ENCODE measurements at regions of chr19 and their contacts with region 1.

Region 1: DNA sequence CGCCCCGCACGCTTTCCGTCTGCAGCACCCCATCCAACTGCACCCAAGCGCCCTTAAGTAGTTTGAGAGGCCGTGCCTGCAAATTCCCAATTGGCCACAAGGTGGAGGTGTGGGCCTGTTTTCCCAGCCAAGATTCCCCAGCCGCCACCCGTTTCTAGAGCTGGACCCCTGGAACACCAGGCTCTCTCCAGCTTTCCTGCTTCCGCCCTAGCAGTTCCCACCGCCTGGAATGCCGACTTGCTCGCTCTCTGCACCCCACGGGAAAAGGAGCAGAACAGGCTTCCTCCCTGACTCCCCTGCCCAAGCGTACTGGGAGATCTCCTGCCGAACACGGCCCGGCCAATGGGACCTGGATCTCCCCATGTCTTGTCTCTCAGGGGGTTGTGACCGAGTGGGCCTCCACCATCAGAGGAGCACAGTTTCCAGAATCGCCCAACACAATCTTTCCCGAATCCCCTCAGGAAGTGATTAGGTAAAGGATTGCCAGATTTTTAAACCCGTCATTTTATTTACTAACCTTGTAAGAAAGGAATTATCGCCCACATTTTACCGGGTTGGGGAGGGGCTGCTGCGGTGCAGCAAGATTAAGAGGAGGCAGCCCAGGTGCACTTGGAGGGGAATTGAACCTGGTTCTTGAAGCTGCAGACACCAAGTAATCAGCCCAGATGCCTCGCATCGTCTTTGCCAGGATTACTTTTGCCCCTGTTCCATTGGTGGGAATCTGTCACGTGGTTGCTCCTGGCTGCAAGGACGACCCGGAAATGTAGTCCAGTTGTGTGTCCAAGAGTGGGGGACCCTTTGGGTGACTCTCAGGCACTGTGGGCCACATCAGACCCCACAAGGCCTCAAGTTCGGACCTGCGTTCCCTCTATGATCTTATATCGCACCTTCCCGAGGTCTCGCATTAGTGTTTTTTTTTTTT is 3.5 kb upstream of the NAPSA start:
- DNase-seq: peak; percentile 53 to 89 (median 73)
- ATAC-seq: peak; percentile 83
- H3K4me3 ChIP-seq: peak overlapping the region; percentile 72
- H3K4me3 Mint-ChIP-seq: peak overlapping the region; percentile 88
- H3K27ac ChIP-seq: peak overlapping the region in 1 of 2 donors; percentile 8
- H3K27ac Mint-ChIP-seq: peak overlapping the region; percentile 33
- H3K4me1 ChIP-seq: peaks cover 38% of the 10 kb centered on the region
- H3K4me1 Mint-ChIP-seq: peaks cover 39% of the 10 kb centered on the region
- H3K27me3 ChIP-seq: no peaks in the 10 kb centered on the region
- H3K27me3 Mint-ChIP-seq: no peaks in the 10 kb centered on the region
- CTCF ChIP-seq: peak; percentile 84

Region 2: DNA sequence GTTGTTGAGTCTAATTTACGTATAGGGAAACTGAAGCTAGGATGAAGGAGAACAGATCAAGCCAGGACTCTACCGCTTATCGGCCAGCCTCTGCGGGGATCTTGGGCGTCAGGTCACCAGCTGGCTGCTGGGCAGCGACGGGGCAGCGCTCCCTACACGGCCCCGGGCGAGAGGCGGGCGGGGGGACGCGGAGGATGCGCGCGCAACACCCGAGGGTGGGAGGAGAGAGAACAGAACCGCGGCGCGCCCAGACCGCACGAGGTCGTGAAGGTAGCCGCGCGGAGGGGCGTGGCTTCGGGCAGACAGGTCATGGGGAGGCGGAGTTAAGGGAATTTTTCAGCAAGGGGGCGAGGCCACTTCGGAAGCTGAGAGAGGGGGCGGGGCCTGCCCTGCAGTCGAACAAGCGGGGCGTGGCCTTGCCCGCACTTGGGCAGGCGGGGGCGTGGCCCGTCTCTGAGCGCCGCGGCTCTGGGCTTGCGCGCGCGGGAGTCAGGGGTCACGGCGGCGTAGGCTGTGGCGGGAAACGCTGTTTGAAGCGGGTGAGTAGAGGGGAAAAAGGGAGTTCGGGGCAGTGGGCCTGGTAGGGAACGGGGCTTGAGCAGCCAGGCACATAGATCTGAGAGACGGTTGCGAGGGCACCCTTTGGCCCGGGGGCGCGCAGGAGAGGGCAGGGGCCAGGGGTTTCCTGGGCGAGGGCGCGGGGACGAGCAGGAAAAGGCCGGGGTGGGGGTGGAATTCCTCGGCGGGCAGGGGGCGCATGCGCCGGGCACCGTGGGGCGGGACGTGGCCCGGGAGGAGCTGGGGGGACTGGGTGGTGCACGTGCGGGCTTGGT is 15.2 kb after region 1 on chr19 and contains the start of gene POLD1:
- CTCF ChIA-PET with region 1: interaction called, 4 read pairs
- POLR2A ChIA-PET with region 1: interaction called, 10 read pairs
- intact Hi-C with region 1: no loop called
- DNase-seq: peak; percentile 98 to 100 (median 99)
- ATAC-seq: peak; percentile 88
- H3K4me3 ChIP-seq: peak within 1 kb of the TSS; percentile 66
- H3K4me3 Mint-ChIP-seq: peak within 1 kb of the TSS; percentile 96
- H3K27ac ChIP-seq: peak within 1 kb of the TSS; percentile 70 to 81
- H3K27ac Mint-ChIP-seq: peak within 1 kb of the TSS; percentile 90
- H3K4me1 ChIP-seq: peaks cover 22% of the 10 kb centered on the region
- H3K4me1 Mint-ChIP-seq: peaks cover 38% of the 10 kb centered on the region
- H3K27me3 ChIP-seq: no peaks in the 10 kb centered on the region
- H3K27me3 Mint-ChIP-seq: peaks cover 6% of the 10 kb centered on the region
- CTCF ChIP-seq: no peak
- total RNA-seq, gene POLD1: 22.1 to 24.2 TPM

Region 3: GRCh38 chr19:50414864-50415660 is 46.2 kb after region 1 on chr19:
- CTCF ChIA-PET with region 1: interaction called, 6 read pairs
- POLR2A ChIA-PET with region 1: no interaction called
- intact Hi-C with region 1: loop called (anchors 1 kb)
- DNase-seq: peak; percentile 57 to 84 (median 69)
- ATAC-seq: peak; percentile 94
- H3K4me3 ChIP-seq: no peak overlapping the region
- H3K4me3 Mint-ChIP-seq: no peak overlapping the region
- H3K27ac ChIP-seq: no peak overlapping the region
- H3K27ac Mint-ChIP-seq: no peak overlapping the region
- H3K4me1 ChIP-seq: peaks cover 10% of the 10 kb centered on the region
- H3K4me1 Mint-ChIP-seq: peaks cover 2% of the 10 kb centered on the region
- H3K27me3 ChIP-seq: peaks cover 17 to 19% of the 10 kb centered on the region in 2 experiments
- H3K27me3 Mint-ChIP-seq: peaks cover 16% of the 10 kb centered on the region
- CTCF ChIP-seq: peak; percentile 62

Region 4: GRCh38 chr19:50461066-50461875 is 92.4 kb after region 1 on chr19:
- CTCF ChIA-PET with region 1: interaction called, 5 read pairs
- POLR2A ChIA-PET with region 1: no interaction called
- intact Hi-C with region 1: loop called (anchors 1 kb)
- DNase-seq: peak in 13 of 14 experiments; percentile 26 to 79 (median 45)
- ATAC-seq: peak; percentile 90
- H3K4me3 ChIP-seq: no peak overlapping the region
- H3K4me3 Mint-ChIP-seq: no peak overlapping the region
- H3K27ac ChIP-seq: no peak overlapping the region
- H3K27ac Mint-ChIP-seq: no peak overlapping the region
- H3K4me1 ChIP-seq: peaks cover 5% of the 10 kb centered on the region
- H3K4me1 Mint-ChIP-seq: no peaks in the 10 kb centered on the region
- H3K27me3 ChIP-seq: peaks cover 7 to 19% of the 10 kb centered on the region in 2 experiments
- H3K27me3 Mint-ChIP-seq: peaks cover 51% of the 10 kb centered on the region
- CTCF ChIP-seq: peak; percentile 70

Region 5: GRCh38 chr19:50476224-50476942 is 107.5 kb after region 1 on chr19 and contains the starts of genes EMC10 and GARIN5A:
- CTCF ChIA-PET with region 1: no interaction called
- POLR2A ChIA-PET with region 1: no interaction called
- intact Hi-C with region 1: loop called in 1 of 2 experiments (anchors 5 kb)
- DNase-seq: peak; percentile 81 to 98 (median 92)
- ATAC-seq: peak; percentile 95
- H3K4me3 ChIP-seq: peak within 1 kb of the TSS; percentile 79
- H3K4me3 Mint-ChIP-seq: peak within 1 kb of the TSS; percentile 95
- H3K27ac ChIP-seq: peak within 1 kb of the TSS; percentile 73 to 82
- H3K27ac Mint-ChIP-seq: peak within 1 kb of the TSS; percentile 95
- H3K4me1 ChIP-seq: peaks cover 43% of the 10 kb centered on the region
- H3K4me1 Mint-ChIP-seq: peaks cover 22% of the 10 kb centered on the region
- H3K27me3 ChIP-seq: no peaks in the 10 kb centered on the region
- H3K27me3 Mint-ChIP-seq: no peaks in the 10 kb centered on the region
- CTCF ChIP-seq: no peak
- total RNA-seq, gene EMC10: 80.0 to 80.3 TPM
- total RNA-seq, gene GARIN5A: 0.50 TPM in 1 of 2 experiments, not detected in the other

Region 6: GRCh38 chr19:50556282-50557008 is 187.5 kb after region 1 on chr19:
- CTCF ChIA-PET with region 1: interaction called, 3 read pairs
- POLR2A ChIA-PET with region 1: no interaction called
- intact Hi-C with region 1: loop called in 1 of 2 experiments (anchors 2 kb)
- DNase-seq: peak; percentile 49 to 82 (median 68)
- ATAC-seq: peak; percentile 79
- H3K4me3 ChIP-seq: peak overlapping the region; percentile 47
- H3K4me3 Mint-ChIP-seq: peak overlapping the region; percentile 90
- H3K27ac ChIP-seq: no peak overlapping the region
- H3K27ac Mint-ChIP-seq: no peak overlapping the region
- H3K4me1 ChIP-seq: peaks cover 17% of the 10 kb centered on the region
- H3K4me1 Mint-ChIP-seq: peaks cover 9% of the 10 kb centered on the region
- H3K27me3 ChIP-seq: peaks cover 35 to 56% of the 10 kb centered on the region in 2 experiments
- H3K27me3 Mint-ChIP-seq: peaks cover 87% of the 10 kb centered on the region
- CTCF ChIP-seq: peak; percentile 84

Region 7: GRCh38 chr19:50580970-50581634 is 212.2 kb after region 1 on chr19:
- CTCF ChIA-PET with region 1: no interaction called
- POLR2A ChIA-PET with region 1: no interaction called
- intact Hi-C with region 1: no loop called
- DNase-seq: no peak
- ATAC-seq: no peak
- H3K4me3 ChIP-seq: no peak overlapping the region
- H3K4me3 Mint-ChIP-seq: no peak overlapping the region
- H3K27ac ChIP-seq: no peak overlapping the region
- H3K27ac Mint-ChIP-seq: no peak overlapping the region
- H3K4me1 ChIP-seq: no peaks in the 10 kb centered on the region
- H3K4me1 Mint-ChIP-seq: no peaks in the 10 kb centered on the region
- H3K27me3 ChIP-seq: no peaks in the 10 kb centered on the region
- H3K27me3 Mint-ChIP-seq: peaks cover 35% of the 10 kb centered on the region
- CTCF ChIP-seq: no peak